ENCODE measurements at regions of chr2 and their contacts with region 1.

Region 1: DNA sequence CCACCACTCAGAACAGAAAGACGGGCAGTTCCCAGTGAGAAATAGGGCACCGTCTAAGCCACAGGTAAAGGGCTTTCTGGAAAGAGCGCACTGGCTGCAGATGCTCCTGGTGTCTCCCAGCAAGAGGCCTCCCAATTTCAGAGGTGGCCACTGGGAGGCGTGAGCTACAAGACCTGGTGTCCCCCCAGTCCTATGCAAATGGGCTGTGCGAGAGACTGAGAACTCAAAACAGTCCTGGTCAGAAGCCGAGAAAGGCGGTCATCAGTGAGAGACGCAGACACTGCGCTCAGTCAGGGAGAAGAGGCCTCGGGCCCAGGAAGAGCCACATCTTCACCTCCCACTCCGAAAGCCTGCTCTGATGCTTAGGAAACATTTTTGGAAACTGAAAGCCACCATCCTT is 179.5 kb downstream of the EIPR1 start:
- DNase-seq: peak in 5 of 10 donors; percentile 46 to 69 (median 55)
- H3K4me3 ChIP-seq: peak overlapping the region in 3 of 59 donors; percentile 16 to 26 (median 26)
- H3K27ac ChIP-seq: peak overlapping the region in 25 of 59 donors; percentile 12 to 67 (median 36)
- H3K27me3 ChIP-seq: no peaks in the 10 kb centered on the region
- CTCF ChIP-seq: peak in 45 of 56 donors; percentile 9 to 58 (median 40)

Region 2: DNA sequence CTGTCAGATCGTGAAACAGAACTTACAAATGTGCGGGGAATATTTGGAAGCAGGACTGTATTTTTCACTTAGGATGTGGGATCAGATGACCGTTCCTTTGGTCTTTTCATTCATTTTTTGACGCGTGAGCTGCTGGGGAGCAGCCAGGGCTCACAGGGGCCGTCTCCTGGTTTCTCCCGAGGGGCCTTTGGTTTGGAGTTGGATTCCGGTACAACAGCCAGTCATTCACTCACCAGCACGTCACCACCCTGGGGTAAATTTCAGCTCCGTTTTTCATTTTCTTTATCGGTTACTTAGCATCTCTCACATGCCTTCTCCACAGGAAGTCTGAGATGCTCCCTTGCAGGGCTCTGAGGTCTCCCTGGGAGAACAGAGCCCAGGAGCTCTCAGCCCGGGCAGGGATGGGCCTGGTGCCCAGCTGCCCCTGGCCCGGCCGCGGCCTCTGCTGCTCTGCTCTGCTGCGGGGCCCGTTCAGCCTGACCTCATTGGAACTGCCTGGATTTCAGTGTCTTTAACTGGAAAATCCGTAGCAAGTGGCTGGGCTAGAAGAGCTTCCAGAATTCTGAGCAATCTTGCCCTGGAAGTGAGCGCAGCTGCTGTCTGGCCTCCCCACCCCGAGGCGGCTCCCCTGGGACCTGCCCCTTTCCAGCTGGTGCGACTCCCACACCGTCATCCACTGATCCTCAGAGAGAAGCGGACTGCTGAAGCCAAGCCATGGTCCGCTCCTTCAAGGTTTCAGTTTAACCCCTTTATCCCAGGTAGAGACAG is 156.1 kb before region 1 on chr2:
- intact Hi-C with region 1: no loop called
- DNase-seq: no peak
- H3K4me3 ChIP-seq: no peak overlapping the region
- H3K27ac ChIP-seq: no peak overlapping the region
- H3K27me3 ChIP-seq: peaks cover 0 to 5% (median 0%) of the 10 kb centered on the region in 45 donors
- CTCF ChIP-seq: no peak

Region 3: GRCh38 chr2:3399829-3400228 is 201.7 kb after region 1 on chr2:
- intact Hi-C with region 1: loop called in 1 of 2 experiments (anchors 10 kb)
- DNase-seq: peak; percentile 66 to 93 (median 89)
- H3K4me3 ChIP-seq: peak overlapping the region in 53 of 59 donors; percentile 6 to 59 (median 36)
- H3K27ac ChIP-seq: peak overlapping the region; percentile 44 to 98 (median 91)
- H3K27me3 ChIP-seq: no peaks in the 10 kb centered on the region
- CTCF ChIP-seq: peak in 4 of 56 donors; percentile 7 to 22 (median 15)

Region 4: DNA sequence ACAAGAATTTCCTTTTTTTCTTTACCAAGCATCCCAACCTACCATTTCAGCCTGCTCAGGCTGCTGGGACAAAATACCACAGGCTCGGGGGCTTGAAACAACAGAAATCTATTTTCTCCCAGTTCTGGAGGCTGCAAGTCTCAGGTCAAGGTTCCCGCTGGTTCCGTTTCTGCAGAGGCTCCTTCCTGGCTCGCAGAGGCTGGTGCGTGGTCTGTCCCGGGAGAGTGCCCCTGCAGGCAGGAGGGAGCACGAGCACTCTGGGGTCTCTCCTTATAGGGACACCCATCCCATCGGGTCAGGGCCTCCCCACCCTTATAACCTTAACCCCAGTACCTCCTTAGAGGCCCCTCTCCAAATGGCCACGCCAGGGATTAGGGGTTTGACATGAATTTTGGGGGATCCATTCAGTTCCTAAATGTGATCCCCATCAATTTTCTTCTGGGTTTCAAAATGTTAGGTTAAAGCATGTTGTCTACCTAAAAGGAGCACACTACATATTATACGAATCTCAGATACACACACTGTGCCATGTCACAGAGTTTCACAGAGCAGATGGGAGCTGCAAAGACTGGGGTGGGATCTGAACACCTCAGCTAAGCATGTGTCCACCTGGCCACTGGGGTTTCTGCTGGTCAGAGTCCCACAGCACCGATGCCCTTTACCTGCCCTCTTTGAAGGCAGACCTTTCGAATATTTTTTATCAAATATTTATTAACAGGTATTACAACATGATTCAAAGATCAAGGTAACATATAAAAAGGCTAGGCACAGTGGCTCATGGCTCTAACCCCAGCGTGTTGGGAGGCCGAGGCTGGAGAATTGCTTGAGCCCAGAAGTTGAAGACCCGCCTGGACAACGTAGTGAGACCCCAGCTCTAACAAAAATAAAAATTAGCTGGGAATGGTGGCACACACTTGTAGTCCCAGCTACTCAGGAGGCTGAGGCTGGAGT is 338.8 kb after region 1 on chr2:
- intact Hi-C with region 1: no loop called
- DNase-seq: no peak
- H3K4me3 ChIP-seq: peak overlapping the region in 43 of 59 donors; percentile 0 to 54 (median 29)
- H3K27ac ChIP-seq: peak overlapping the region in 58 of 59 donors; percentile 27 to 96 (median 86)
- H3K27me3 ChIP-seq: no peaks in the 10 kb centered on the region
- CTCF ChIP-seq: peak in 10 of 56 donors; percentile 6 to 18 (median 14)

Measured in dorsolateral prefrontal cortex (tissue), 120 donors.